GM12878 (cell line): ENCODE measurements at regions of chr5 and their contacts with region 1.

Region 1: DNA sequence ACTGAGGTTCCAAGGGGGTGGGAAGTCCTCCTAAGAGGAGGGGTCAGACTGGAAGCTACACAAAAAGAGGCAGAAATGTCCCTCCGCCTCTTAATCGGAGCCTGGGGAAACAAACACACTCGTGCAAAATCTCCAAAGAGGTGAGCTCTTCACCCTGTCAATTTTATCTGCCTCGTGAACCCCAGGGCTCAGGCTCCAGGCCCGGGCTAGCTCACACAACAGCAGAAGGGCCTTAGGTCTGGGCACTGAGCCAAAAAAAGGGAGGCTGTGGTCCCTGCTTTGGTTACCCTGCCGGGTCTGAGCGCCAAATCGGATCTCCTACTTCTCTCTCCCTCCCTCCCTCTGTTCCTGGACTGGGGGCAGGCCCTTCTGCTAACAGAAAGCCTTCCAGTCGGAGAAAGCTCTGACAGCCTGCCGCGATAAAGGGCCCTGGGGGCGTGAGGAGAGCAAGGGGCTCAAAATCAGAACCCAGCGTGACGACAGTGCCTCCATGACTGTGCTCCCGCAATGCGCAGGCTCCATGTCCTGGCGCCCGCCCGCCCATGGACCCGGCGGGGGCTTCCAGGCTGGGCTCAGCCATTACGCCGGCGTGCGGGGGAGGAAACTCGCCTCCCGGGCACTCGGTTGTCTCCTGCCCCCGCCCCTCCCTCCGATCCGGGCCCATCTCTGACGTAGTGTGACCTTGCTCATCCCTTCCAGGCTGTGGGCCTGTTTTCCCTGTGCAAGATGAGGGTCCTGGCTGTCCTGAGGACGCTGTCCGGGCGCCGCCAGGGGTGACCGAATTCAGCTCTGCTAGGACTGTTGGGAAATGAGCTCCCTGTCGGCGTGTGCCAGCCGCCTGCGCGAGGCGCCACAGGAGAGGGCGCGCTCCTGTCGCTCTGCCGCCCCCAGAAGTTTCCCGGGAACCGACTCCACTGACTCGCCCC is 865 bp upstream of the SLC22A4 start:
- DNase-seq: no peak
- ATAC-seq: peak; percentile 67
- H3K4me3 ChIP-seq: peak overlapping the region; percentile 70
- H3K27ac ChIP-seq: no peak overlapping the region
- H3K4me1 ChIP-seq: peaks cover 21% of the 10 kb centered on the region
- H3K27me3 ChIP-seq: peaks cover 5 to 25% of the 10 kb centered on the region in 2 experiments; a peak in 3 of 4 replicates
- CTCF ChIP-seq: peak in 2 of 3 experiments; percentile 10 to 18; a peak in 2 of 6 replicates
- EP300 ChIP-seq: no peak
- POLR2A ChIP-seq: peak; percentile 60; the same call in 1 of the 2 replicates
- RAD21 ChIP-seq: no peak

Region 2: GRCh38 chr5:132094393-132095076 is 198.8 kb before region 1 on chr5:
- CTCF ChIA-PET with region 1: no interaction called
- POLR2A ChIA-PET with region 1: no interaction called
- RAD21 ChIA-PET with region 1: no interaction called
- SMC1A ChIA-PET with region 1: no interaction called
- in situ Hi-C with region 1: no loop called
- intact Hi-C with region 1: no loop called
- DNase-seq: no peak
- ATAC-seq: no peak
- H3K4me3 ChIP-seq: no peak overlapping the region
- H3K27ac ChIP-seq: no peak overlapping the region
- H3K4me1 ChIP-seq: peaks cover 32% of the 10 kb centered on the region
- H3K27me3 ChIP-seq: no peaks in the 10 kb centered on the region
- CTCF ChIP-seq: no peak
- EP300 ChIP-seq: no peak
- POLR2A ChIP-seq: no peak
- RAD21 ChIP-seq: no peak

Region 3: GRCh38 chr5:132260714-132261551 is 32.4 kb before region 1 on chr5:
- CTCF ChIA-PET with region 1: interaction called, 9 read pairs
- POLR2A ChIA-PET with region 1: interaction called, 18 read pairs
- RAD21 ChIA-PET with region 1: interaction called, 21 read pairs
- SMC1A ChIA-PET with region 1: no interaction called
- in situ Hi-C with region 1: no loop called
- intact Hi-C with region 1: no loop called
- DNase-seq: peak; percentile 61
- ATAC-seq: peak; percentile 73
- H3K4me3 ChIP-seq: no peak overlapping the region
- H3K27ac ChIP-seq: no peak overlapping the region
- H3K4me1 ChIP-seq: peaks cover 6% of the 10 kb centered on the region; the same call in 1 of the 2 replicates
- H3K27me3 ChIP-seq: peaks cover 2 to 7% of the 10 kb centered on the region in 2 experiments
- CTCF ChIP-seq: no peak
- EP300 ChIP-seq: no peak
- POLR2A ChIP-seq: no peak
- RAD21 ChIP-seq: no peak

Region 4: DNA sequence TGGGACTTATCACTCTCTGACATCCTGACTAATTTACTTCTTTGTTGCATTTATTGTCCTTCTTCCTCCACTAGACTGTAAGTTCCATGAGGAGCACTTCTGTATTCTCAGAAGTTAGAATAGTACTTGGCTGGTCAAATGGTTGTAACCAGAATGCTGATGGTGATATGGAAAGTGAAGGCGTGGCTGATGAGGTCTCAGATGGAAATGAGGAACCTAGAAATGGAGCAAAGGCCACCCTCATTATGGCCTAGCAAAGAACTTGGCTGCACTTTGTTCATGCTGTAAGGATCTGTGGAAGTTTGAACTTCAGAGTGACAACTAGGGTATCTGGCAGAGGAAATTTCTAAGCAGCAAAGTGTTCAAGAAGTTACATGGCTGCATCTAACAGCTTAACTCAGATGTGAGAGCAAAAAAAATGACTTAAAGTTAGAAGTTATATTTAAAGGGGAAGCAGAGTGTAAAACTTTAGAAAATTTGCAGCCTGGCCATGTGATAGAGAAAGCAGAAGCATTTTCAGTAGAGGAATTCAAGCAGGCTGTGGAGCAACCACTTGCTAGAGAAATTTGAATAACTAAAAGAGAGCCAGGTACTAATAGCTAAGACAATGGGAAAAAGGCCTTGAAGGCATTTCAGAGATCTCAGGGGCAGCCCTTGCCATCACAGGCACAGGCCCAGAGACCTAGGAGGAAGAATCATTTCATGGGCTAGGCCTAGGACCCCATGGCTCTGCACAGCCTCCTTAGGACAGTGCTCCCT is 61.2 kb after region 1 on chr5:
- CTCF ChIA-PET with region 1: interaction called, 8 read pairs
- POLR2A ChIA-PET with region 1: interaction called, 4 read pairs
- RAD21 ChIA-PET with region 1: interaction called, 14 read pairs
- SMC1A ChIA-PET with region 1: interaction called, 4 read pairs
- in situ Hi-C with region 1: no loop called
- intact Hi-C with region 1: no loop called
- DNase-seq: no peak
- ATAC-seq: peak; percentile 12; the same call in 1 of the 3 replicates
- H3K4me3 ChIP-seq: no peak overlapping the region
- H3K27ac ChIP-seq: no peak overlapping the region
- H3K4me1 ChIP-seq: peaks cover 12% of the 10 kb centered on the region
- H3K27me3 ChIP-seq: no peaks in the 10 kb centered on the region
- CTCF ChIP-seq: no peak
- EP300 ChIP-seq: no peak
- POLR2A ChIP-seq: no peak
- RAD21 ChIP-seq: no peak

Region 5: GRCh38 chr5:132369474-132370180 is 76.3 kb after region 1 on chr5 and contains the start of gene SLC22A5:
- CTCF ChIA-PET with region 1: interaction called, 3 read pairs
- POLR2A ChIA-PET with region 1: interaction called, 4 read pairs
- RAD21 ChIA-PET with region 1: interaction called, 19 read pairs
- SMC1A ChIA-PET with region 1: interaction called, 7 read pairs
- in situ Hi-C with region 1: no loop called
- intact Hi-C with region 1: no loop called
- DNase-seq: no peak
- ATAC-seq: peak; percentile 97
- H3K4me3 ChIP-seq: peak within 1 kb of the TSS; percentile 84
- H3K27ac ChIP-seq: peak within 1 kb of the TSS; percentile 31; the same call in 1 of the 2 replicates
- H3K4me1 ChIP-seq: peaks cover 8% of the 10 kb centered on the region
- H3K27me3 ChIP-seq: no peaks in the 10 kb centered on the region; a peak in 2 of 4 replicates
- CTCF ChIP-seq: no peak
- EP300 ChIP-seq: no peak
- POLR2A ChIP-seq: peak; percentile 71
- RAD21 ChIP-seq: no peak
- polyA plus RNA-seq, gene SLC22A5: 1.1 to 1.9 TPM